Cardiac septum (tissue), 1 donor: ENCODE measurements at regions of chr2 and their contacts with region 1.

Region 1: GRCh38 chr2:222792001-222792611 is 68.7 kb upstream of the ACSL3 start:
- DNase-seq: peak; percentile 79

Region 2: DNA sequence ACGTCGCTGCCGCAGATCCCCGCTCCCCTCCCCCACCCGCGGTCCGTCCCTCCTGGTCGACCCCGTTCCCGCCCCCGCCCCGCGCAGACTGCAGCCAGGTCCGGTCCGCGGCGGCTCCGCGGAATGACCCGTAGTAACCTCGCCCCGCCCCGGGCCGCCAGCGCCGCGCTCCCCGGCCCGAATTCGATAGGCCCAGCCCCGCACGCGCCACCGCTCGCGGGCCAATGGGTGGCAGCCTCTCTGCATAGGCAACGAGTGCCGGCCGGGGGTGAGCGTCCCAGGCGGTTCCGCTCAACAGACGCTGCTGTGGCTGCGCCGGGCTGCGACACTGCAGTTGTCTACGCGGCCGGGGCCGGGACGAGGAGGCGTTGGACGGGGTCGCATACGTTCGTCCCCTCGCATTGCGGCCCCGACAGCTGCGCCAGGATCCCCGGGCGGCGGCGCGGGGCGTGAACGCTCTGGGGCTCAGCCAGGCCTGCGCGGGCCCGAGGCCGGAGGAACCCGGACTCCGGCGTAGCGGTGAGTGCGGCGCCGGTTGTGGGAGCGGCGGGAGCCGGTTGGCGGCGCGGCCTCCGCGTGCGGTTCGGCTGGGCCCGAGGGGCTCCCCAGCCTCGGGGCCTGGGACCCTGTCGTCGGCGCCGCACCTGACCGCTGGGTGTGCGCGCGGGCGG is 68.8 kb after region 1 on chr2 and contains the start of gene ACSL3:
- intact Hi-C with region 1: loop called (anchors 1 kb)
- DNase-seq: peak; percentile 99
- total RNA-seq, gene ACSL3: 37.4 TPM

Region 3: DNA sequence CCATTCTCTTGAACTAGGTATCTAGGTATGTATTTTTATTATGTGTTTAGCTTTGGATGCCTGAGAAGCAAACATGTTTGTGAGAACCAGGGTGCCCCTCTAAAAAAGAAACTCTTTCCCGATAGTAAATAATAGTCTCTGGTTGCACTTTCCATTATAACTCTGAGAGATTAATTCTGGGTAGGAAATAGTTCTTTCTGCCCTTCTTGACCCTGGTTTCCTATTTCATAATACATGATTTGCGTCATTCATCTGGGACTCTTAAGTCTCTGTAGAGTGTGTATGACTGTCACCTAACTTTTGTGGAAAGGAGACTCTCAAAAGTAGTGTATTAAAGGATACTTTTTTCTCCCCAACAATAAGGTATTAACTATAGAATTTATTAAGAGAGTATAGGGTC is 100.2 kb after region 1 on chr2:
- intact Hi-C with region 1: loop called (anchors 5 kb)
- DNase-seq: no peak